ENCODE measurements at regions of chr18 and their contacts with region 1.

Region 1: GRCh38 chr18:61502472-61502871 is 169.2 kb downstream of the CDH20 start:
- H3K4me3 ChIP-seq: no peak overlapping the region
- H3K27ac ChIP-seq: no peak overlapping the region
- H3K4me1 ChIP-seq: no peaks in the 10 kb centered on the region
- CTCF ChIP-seq: no peak

Region 2: DNA sequence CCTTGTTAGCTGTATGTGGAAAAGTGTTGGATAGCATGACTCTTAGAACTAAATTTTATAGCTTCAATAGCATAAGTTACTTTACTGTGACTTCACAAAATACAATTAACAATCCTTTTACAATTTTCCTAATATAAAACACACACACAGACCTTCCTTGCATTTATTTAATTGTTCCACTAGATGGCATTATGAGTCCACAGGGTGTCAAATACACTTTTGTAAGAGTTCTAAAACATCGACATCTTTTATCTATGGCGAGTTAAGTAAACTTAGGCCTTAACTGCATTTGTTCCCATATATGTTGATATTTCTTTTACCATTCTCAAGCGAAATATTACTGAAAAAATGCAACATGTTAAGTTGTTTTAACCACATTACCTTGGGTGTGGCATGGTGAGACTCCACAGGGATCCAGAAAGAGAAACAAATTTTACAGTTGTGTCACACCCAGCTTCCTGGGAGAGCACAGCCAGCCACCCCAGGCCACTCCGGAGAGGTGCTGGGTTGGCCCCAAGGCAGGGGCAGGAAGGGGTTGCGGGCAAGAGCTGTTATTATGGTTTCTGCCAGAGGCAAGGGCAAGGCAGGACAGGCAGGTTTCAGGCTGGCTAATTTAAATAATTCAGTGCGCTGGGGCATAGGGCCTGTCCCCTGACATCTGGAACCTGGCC is 817.5 kb before region 1 on chr18:
- CTCF ChIA-PET with region 1: interaction called, 10 read pairs
- POLR2A ChIA-PET with region 1: no interaction called
- H3K4me3 ChIP-seq: no peak overlapping the region
- H3K27ac ChIP-seq: no peak overlapping the region
- H3K4me1 ChIP-seq: no peaks in the 10 kb centered on the region
- CTCF ChIP-seq: no peak

Region 3: GRCh38 chr18:60809937-60810336 is 692.5 kb before region 1 on chr18:
- CTCF ChIA-PET with region 1: interaction called, 11 read pairs
- POLR2A ChIA-PET with region 1: no interaction called
- H3K4me3 ChIP-seq: no peak overlapping the region
- H3K27ac ChIP-seq: no peak overlapping the region
- H3K4me1 ChIP-seq: no peaks in the 10 kb centered on the region
- CTCF ChIP-seq: no peak